ENCODE measurements at regions of chr12 and their contacts with region 1.

Region 1: GRCh38 chr12:95608252-95609033 is 57.2 kb upstream of the USP44 start:
- DNase-seq: peak; percentile 91
- ATAC-seq: peak; percentile 58
- H3K4me3 ChIP-seq: no peak overlapping the region
- H3K27ac ChIP-seq: peak overlapping the region; percentile 91
- H3K4me1 ChIP-seq: peaks cover 71% of the 10 kb centered on the region
- H3K27me3 ChIP-seq: no peaks in the 10 kb centered on the region
- CTCF ChIP-seq: no peak

Region 2: GRCh38 chr12:95437565-95437964 is 170.9 kb before region 1 on chr12:
- CTCF ChIA-PET with region 1: no interaction called
- POLR2A ChIA-PET with region 1: no interaction called
- intact Hi-C with region 1: no loop called
- DNase-seq: no peak
- ATAC-seq: no peak
- H3K4me3 ChIP-seq: no peak overlapping the region
- H3K27ac ChIP-seq: no peak overlapping the region
- H3K4me1 ChIP-seq: no peaks in the 10 kb centered on the region
- H3K27me3 ChIP-seq: no peaks in the 10 kb centered on the region
- CTCF ChIP-seq: no peak

Region 3: GRCh38 chr12:95633049-95633545 is 24.7 kb after region 1 on chr12:
- CTCF ChIA-PET with region 1: no interaction called
- POLR2A ChIA-PET with region 1: interaction called, 5 read pairs
- intact Hi-C with region 1: loop called (anchors 2 kb)
- DNase-seq: peak; percentile 98
- ATAC-seq: peak; percentile 93
- H3K4me3 ChIP-seq: no peak overlapping the region
- H3K27ac ChIP-seq: peak overlapping the region; percentile 91
- H3K4me1 ChIP-seq: peaks cover 38% of the 10 kb centered on the region
- H3K27me3 ChIP-seq: no peaks in the 10 kb centered on the region
- CTCF ChIP-seq: no peak; the same call in 1 of the 2 replicates

Region 4: GRCh38 chr12:95649375-95649791 is 40.9 kb after region 1 on chr12:
- CTCF ChIA-PET with region 1: interaction called, 3 read pairs
- POLR2A ChIA-PET with region 1: no interaction called
- intact Hi-C with region 1: loop called (anchors 1 kb)
- DNase-seq: peak; percentile 98
- ATAC-seq: peak; percentile 89
- H3K4me3 ChIP-seq: no peak overlapping the region
- H3K27ac ChIP-seq: peak overlapping the region; percentile 90
- H3K4me1 ChIP-seq: peaks cover 48% of the 10 kb centered on the region
- H3K27me3 ChIP-seq: no peaks in the 10 kb centered on the region
- CTCF ChIP-seq: no peak

Region 5: GRCh38 chr12:95700316-95700785 is 91.9 kb after region 1 on chr12:
- CTCF ChIA-PET with region 1: no interaction called
- POLR2A ChIA-PET with region 1: no interaction called
- intact Hi-C with region 1: loop called (anchors 10 kb)
- DNase-seq: peak; percentile 84
- ATAC-seq: peak; percentile 26
- H3K4me3 ChIP-seq: no peak overlapping the region
- H3K27ac ChIP-seq: peak overlapping the region; percentile 99
- H3K4me1 ChIP-seq: peaks cover 33% of the 10 kb centered on the region
- H3K27me3 ChIP-seq: no peaks in the 10 kb centered on the region
- CTCF ChIP-seq: no peak

Region 6: DNA sequence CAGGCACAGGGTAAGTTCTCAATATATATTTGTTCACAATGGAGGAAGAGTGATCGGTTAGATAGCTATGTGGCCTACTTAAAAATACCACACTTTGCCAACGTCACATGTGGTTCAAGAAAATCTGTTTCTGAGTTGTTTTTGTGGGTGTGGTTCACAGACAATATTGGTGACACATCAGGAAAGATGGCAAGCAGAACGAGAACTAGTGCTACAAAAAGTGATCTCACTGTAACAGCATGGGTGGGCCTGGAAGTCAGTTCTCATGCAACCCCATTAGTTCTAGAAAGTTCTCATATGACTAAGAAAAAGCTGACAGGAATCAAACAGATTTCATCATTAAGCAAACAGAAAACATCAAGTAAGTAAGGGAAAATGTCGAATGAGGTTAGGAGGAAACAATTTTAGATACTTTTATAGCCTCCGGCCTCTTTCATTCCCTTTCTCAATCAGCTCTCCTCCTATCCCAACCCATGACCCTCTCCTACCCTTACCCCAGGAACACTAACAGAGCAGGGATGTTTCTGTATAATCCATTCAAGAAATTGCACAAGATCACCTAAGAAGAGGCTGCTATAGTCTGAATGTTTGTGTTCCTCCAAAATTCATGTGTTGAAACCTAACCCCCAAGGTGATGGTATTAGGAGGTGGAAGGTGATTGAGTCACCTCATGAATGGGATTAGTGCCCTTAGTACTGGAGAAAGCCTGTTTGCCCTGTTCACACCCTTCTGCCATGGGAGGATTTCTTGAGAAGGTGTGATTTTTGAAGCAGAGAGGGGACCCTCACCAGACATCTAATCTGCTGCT is 197.6 kb after region 1 on chr12:
- CTCF ChIA-PET with region 1: no interaction called
- POLR2A ChIA-PET with region 1: interaction called, 6 read pairs
- intact Hi-C with region 1: loop called (anchors 1 kb)
- DNase-seq: peak; percentile 99
- ATAC-seq: peak; percentile 67
- H3K4me3 ChIP-seq: peak overlapping the region; percentile 19; the same call in 1 of the 2 replicates
- H3K27ac ChIP-seq: peak overlapping the region; percentile 98
- H3K4me1 ChIP-seq: peaks cover 77% of the 10 kb centered on the region
- H3K27me3 ChIP-seq: no peaks in the 10 kb centered on the region
- CTCF ChIP-seq: no peak

Measured in PC-3 (cell line).